Adrenal gland (tissue), 19 donors: ENCODE measurements at regions of chr12 and their contacts with region 1.

Region 1: DNA sequence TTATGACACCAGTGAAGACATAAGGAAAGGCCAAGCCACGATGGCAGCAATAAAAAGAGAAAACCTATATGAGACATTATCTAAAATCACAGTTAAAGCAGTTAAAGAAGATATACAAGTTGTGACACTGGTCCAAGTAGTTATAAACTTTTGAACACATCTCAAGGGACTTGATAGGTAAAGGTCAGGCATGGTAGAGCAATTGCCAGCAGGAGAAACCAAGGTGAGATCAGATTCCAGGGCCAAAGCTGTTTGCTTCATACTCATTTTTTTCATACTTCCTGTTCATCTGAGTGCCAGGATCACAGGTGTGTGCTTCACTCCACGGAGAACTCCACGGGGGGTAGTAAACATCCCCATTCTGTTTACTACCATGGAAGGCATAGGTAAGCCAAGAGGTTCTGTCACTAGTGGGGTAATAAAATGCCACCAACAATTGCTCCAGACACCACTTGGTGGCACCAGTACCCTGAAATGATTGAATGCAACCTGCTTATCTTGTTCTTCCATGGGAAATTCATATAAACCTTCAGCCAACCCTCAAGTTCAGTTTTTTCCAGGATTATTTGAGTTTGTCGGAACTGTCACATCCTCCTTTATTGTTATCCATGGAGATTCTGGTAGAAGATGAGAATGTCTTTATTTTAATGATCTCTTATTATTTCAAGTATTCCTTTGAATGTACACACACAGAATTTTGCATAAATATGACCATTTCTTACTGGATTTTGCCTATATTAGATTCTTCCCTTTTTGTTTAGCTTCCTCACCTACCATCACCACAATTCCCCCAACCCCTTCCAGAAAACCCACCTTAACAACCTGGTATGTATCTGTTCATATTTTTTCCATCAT is 59.2 kb upstream of the TSPAN8 start:
- DNase-seq: peak; percentile 19 to 74 (median 35)
- H3K4me3 ChIP-seq: no peak overlapping the region
- H3K27ac ChIP-seq: no peak overlapping the region
- H3K4me1 ChIP-seq: no peaks in the 10 kb centered on the region
- H3K27me3 ChIP-seq: no peaks in the 10 kb centered on the region
- CTCF ChIP-seq: peak in 5 of 6 experiments; percentile 55 to 66 (median 58)
- POLR2A ChIP-seq: no peak

Region 2: GRCh38 chr12:70619471-70620152 is 597.3 kb before region 1 on chr12:
- intact Hi-C with region 1: no loop called
- DNase-seq: no peak
- H3K4me3 ChIP-seq: no peak overlapping the region
- H3K27ac ChIP-seq: no peak overlapping the region
- H3K4me1 ChIP-seq: no peaks in the 10 kb centered on the region
- H3K27me3 ChIP-seq: no peaks in the 10 kb centered on the region
- CTCF ChIP-seq: no peak
- POLR2A ChIP-seq: no peak

Region 3: GRCh38 chr12:70798016-70798783 is 418.8 kb before region 1 on chr12:
- intact Hi-C with region 1: no loop called
- DNase-seq: peak in 3 of 7 donors; percentile 17 to 46 (median 22)
- H3K4me3 ChIP-seq: no peak overlapping the region
- H3K27ac ChIP-seq: no peak overlapping the region
- H3K4me1 ChIP-seq: no peaks in the 10 kb centered on the region
- H3K27me3 ChIP-seq: no peaks in the 10 kb centered on the region
- CTCF ChIP-seq: no peak
- POLR2A ChIP-seq: no peak

Region 4: DNA sequence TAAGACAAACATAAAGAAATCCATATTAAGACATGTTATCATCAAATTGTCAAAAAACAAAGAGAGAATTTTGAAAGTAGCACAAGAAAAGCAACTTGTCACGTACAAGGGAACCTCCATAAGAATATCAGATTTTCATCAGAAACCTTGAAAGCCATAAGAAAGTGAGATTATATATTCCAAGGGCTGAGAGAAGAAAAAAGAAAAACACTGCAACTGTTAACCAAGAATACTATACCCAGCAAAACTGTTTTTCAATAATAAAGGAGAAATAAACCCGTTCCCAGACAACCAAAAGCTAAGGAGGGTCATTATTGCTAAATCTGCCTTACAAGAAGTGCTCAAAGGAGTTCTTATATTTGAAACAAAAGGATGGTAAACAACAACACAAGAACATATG is 35.5 kb after region 1 on chr12:
- intact Hi-C with region 1: no loop called
- DNase-seq: no peak
- H3K4me3 ChIP-seq: no peak overlapping the region
- H3K27ac ChIP-seq: no peak overlapping the region
- H3K4me1 ChIP-seq: no peaks in the 10 kb centered on the region
- H3K27me3 ChIP-seq: no peaks in the 10 kb centered on the region
- CTCF ChIP-seq: no peak
- POLR2A ChIP-seq: no peak

Region 5: DNA sequence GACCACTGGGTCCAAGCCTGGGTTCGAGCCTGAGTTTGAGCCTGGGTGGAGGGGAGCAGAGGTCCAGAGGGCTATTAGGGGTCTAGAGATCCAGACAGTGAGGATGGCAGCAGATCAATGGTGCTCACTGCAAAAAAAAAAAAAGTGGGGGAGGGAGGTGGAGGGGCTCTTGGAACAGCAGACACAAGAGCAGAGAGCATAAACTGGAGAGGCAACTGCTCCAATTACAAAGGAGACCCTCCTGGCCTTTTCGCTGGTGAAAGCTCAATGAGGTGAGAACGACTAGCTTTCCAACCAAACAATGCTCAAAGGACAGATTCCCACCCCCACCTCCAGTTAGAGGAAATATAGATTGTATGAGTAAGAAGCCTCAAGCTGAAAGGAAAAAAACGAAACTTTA is 65.1 kb after region 1 on chr12:
- intact Hi-C with region 1: no loop called
- DNase-seq: no peak
- H3K4me3 ChIP-seq: no peak overlapping the region
- H3K27ac ChIP-seq: no peak overlapping the region
- H3K4me1 ChIP-seq: no peaks in the 10 kb centered on the region
- H3K27me3 ChIP-seq: no peaks in the 10 kb centered on the region
- CTCF ChIP-seq: no peak
- POLR2A ChIP-seq: no peak

Region 6: GRCh38 chr12:71392521-71393145 is 175.7 kb after region 1 on chr12:
- intact Hi-C with region 1: loop called in 1 of 2 experiments (anchors 10 kb)
- DNase-seq: peak in 5 of 7 donors; percentile 17 to 27 (median 18)
- H3K4me3 ChIP-seq: no peak overlapping the region
- H3K27ac ChIP-seq: no peak overlapping the region
- H3K4me1 ChIP-seq: no peaks in the 10 kb centered on the region
- H3K27me3 ChIP-seq: no peaks in the 10 kb centered on the region
- CTCF ChIP-seq: peak; percentile 80 to 90 (median 84)
- POLR2A ChIP-seq: no peak